Heart right ventricle (tissue), 16 donors: ENCODE measurements at regions of chr21 and their contacts with region 1.

Region 1: DNA sequence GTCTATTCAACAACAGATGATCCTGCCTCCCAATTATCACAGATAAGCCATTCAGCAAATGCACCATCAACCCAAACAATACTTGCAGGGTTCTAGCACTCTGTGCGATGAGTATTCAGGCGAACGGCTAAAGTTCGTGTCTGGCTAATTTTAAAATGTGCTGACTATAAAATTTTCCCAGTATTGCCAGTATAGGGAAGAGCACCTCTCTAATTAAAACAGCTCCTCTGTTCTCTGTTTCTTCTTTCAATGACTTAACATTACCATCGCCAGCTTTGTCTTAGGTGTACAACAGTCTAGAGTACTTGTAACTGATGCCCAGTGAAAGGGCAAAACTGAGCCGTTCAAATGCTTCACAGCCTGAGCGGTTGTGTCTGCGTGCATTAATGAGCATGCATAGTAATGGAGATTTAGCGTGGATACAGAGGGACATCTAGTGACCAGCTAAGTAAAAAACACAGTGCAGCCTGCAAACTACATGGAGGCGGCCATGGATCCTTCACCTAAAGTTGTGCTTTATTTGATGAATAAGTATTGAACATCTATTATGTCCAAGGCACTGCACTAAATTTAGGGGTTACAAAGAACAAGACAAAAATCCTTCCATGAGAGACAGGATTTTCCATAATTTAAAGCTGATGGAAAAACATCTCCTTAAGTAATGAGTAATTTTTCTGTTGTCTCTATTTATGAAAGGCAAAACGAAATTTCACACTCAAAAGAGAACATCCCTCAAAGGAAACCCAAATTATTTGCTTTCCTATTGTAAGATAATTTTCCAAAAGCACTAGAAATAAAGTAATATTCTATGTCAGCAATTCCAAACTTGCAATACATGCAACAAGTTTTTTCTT is 120.0 kb downstream of the SETD4 start:
- DNase-seq: peak in 1 of 2 donors; percentile 50
- ATAC-seq: peak; percentile 88 to 99 (median 94)
- H3K4me3 ChIP-seq: peak overlapping the region in 1 of 10 donors; percentile 11
- H3K27ac ChIP-seq: peak overlapping the region in 3 of 10 donors; percentile 3 to 26 (median 26)
- H3K4me1 ChIP-seq: peaks cover 0 to 10% (median 5%) of the 10 kb centered on the region in 9 donors
- H3K27me3 ChIP-seq: peaks cover 0 to 4% (median 0%) of the 10 kb centered on the region in 7 donors
- CTCF ChIP-seq: peak; percentile 23 to 77 (median 67)

Region 2: GRCh38 chr21:34754690-34755647 is 1185.3 kb before region 1 on chr21:
- intact Hi-C with region 1: loop called in 1 of 10 experiments (anchors 10 kb)
- DNase-seq: no peak
- ATAC-seq: no peak
- H3K4me3 ChIP-seq: no peak overlapping the region
- H3K27ac ChIP-seq: no peak overlapping the region
- H3K4me1 ChIP-seq: no peaks in the 10 kb centered on the region
- H3K27me3 ChIP-seq: peaks cover 0 to 19% (median 6%) of the 10 kb centered on the region in 7 donors
- CTCF ChIP-seq: no peak

Region 3: DNA sequence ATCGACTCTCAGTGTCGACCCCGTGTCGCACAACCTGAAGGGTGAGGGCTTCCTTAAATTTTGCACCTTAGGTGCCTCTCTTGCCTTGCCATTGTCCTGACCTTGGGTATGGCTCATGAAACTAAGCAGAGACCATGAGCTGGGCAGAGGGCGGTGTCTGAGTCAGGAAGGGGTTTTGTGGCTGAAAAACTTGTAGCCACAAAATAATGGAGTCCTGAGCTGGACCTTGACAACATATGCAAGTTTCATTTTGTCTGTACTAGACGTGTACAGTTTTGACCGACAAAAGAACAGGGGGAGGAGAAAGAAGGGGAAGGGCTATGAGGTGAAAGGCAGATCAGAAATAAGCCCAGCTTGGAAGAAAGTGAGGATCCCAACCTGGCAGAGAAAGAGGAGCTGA is 882.9 kb before region 1 on chr21:
- intact Hi-C with region 1: loop called in 4 of 10 experiments (anchors 5 to 10 kb)
- DNase-seq: no peak
- ATAC-seq: no peak
- H3K4me3 ChIP-seq: no peak overlapping the region
- H3K27ac ChIP-seq: no peak overlapping the region
- H3K4me1 ChIP-seq: peaks cover 0 to 10% (median 0%) of the 10 kb centered on the region in 9 donors
- H3K27me3 ChIP-seq: peaks cover 0 to 10% (median 3%) of the 10 kb centered on the region in 7 donors
- CTCF ChIP-seq: no peak

Region 4: DNA sequence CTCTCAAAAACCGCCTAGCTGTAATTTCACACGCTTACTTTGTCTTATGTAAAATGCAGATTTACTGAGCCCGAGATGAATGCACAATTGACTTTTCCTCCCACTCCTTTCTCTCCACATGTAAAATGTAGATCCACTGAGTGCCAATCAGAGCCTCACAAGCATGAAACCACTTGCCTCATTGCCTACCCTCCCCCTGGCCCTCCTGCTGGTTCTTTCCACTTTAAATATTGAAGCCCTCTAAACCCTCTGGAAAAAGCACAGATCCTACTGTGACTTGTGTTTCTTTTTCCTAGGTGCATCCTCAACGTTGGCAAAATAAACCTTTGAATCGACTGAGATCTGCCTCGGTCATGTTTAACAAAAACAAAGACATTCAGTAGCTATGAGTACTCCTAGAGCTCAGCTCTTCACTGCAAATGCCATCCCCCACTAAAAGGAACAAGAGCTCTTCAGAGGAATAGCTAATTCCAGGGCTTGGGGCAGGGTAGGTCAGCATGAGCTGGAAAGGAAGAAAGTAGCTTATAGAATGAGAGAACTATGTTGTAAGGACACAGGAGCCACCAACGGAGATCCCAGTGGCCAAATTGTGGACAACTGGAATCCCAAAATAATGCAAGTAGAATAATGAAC is 525.7 kb before region 1 on chr21:
- intact Hi-C with region 1: loop called in 1 of 10 experiments (anchors 10 kb)
- DNase-seq: no peak
- ATAC-seq: no peak
- H3K4me3 ChIP-seq: no peak overlapping the region
- H3K27ac ChIP-seq: no peak overlapping the region
- H3K4me1 ChIP-seq: no peaks in the 10 kb centered on the region
- H3K27me3 ChIP-seq: peaks cover 0 to 35% (median 10%) of the 10 kb centered on the region in 7 donors
- CTCF ChIP-seq: no peak

Region 5: DNA sequence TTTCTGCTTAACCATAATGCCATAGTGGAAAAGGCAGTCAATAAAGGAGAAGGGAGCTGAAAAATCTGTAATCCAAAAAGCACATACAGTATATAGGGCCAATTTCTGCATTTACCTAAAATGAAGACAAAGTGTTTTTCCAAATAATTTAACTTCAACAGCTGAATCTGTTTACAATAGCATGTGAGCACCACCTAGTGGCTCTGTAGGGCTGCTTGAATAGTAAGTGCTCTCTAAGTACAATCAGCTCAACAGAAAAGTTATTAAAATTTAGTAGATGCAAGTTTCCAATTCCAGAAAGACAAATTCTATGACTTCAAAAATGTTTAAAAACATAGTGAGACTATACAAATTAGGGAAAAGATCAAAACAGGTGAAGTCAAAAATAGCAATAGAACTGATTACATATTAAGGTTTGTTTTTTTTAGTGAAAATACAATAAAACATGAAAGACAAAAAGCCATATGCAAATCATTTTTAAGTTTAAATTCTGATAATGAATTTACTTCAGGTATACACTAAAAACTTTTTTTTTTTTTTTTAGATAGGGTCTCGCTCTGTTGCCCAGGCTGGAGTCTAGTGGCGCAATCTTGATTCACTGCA is 100.0 kb before region 1 on chr21:
- intact Hi-C with region 1: loop called in 2 of 10 experiments (anchors 2 to 10 kb)
- DNase-seq: peak in 1 of 2 donors; percentile 67
- ATAC-seq: peak in 7 of 8 donors; percentile 42 to 81 (median 63)
- H3K4me3 ChIP-seq: no peak overlapping the region
- H3K27ac ChIP-seq: no peak overlapping the region
- H3K4me1 ChIP-seq: peaks cover 0 to 12% (median 2%) of the 10 kb centered on the region in 9 donors
- H3K27me3 ChIP-seq: peaks cover 0 to 5% (median 0%) of the 10 kb centered on the region in 7 donors
- CTCF ChIP-seq: peak; percentile 65 to 91 (median 83)

Region 6: GRCh38 chr21:35925497-35925896 is 14.8 kb before region 1 on chr21:
- intact Hi-C with region 1: no loop called
- DNase-seq: no peak
- ATAC-seq: peak in 1 of 8 donors; percentile 28
- H3K4me3 ChIP-seq: no peak overlapping the region
- H3K27ac ChIP-seq: peak overlapping the region in 2 of 10 donors; percentile 4 to 5
- H3K4me1 ChIP-seq: peaks cover 0 to 14% (median 0%) of the 10 kb centered on the region in 9 donors
- H3K27me3 ChIP-seq: no peaks in the 10 kb centered on the region
- CTCF ChIP-seq: no peak

Region 7: GRCh38 chr21:36310016-36310415 is 369.7 kb after region 1 on chr21:
- intact Hi-C with region 1: no loop called
- DNase-seq: no peak
- ATAC-seq: no peak
- H3K4me3 ChIP-seq: no peak overlapping the region
- H3K27ac ChIP-seq: no peak overlapping the region
- H3K4me1 ChIP-seq: no peaks in the 10 kb centered on the region
- H3K27me3 ChIP-seq: no peaks in the 10 kb centered on the region
- CTCF ChIP-seq: no peak